ENCODE measurements at regions of chr7 and their contacts with region 1.

Region 1: GRCh38 chr7:143008007-143008901 is 18.7 kb downstream of the OR9A2 start:
- DNase-seq: peak; percentile 80
- H3K4me3 ChIP-seq: no peak overlapping the region
- H3K27ac ChIP-seq: no peak overlapping the region
- H3K4me1 ChIP-seq: peaks cover 0 to 5% (median under 1%) of the 10 kb centered on the region in 4 donors
- H3K27me3 ChIP-seq: peaks cover 6% of the 10 kb centered on the region
- CTCF ChIP-seq: peak; percentile 94 to 96 (median 95)
- EP300 ChIP-seq: no peak
- POLR2A ChIP-seq: no peak

Region 2: DNA sequence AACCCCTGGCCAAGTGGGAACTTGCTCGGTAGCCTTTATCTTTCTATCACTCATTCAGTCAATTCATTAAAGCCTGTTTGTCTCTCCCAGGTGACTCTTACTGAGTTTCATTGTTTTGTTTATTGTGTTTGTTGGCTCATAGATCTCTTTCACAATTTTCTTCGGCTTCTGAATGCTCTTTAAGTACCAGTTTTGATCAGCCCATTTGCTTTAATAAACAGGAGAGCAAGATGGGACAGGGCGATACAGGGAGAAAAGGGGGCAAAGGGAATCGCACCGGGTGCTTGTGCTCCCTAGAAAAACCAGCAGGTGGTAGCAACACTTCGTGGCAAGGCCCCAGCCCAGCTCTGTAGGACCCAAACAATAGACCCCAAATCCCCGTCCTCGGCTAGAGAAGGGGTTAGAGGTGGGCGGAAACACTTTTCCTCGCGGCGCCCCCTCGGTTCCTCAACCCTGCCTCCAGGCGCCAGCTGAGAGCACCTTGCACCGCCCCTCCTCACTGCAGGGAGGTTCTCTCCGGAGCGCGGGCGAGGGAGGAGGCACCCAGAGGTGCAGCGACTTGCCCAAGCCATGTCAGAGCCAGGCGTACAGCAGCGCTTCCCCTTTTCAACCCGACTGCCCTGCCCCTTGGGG is 154.4 kb before region 1 on chr7:
- in situ Hi-C with region 1: loop called in 1 of 4 experiments (anchors 10 kb)
- intact Hi-C with region 1: loop called (anchors 5 kb)
- DNase-seq: peak; percentile 70
- H3K4me3 ChIP-seq: peak overlapping the region; percentile 33 to 74 (median 52)
- H3K27ac ChIP-seq: peak overlapping the region; percentile 67 to 76 (median 70)
- H3K4me1 ChIP-seq: peaks cover 0 to 10% (median 4%) of the 10 kb centered on the region in 4 donors
- H3K27me3 ChIP-seq: peaks cover 3% of the 10 kb centered on the region
- CTCF ChIP-seq: peak; percentile 70 to 78 (median 73)
- EP300 ChIP-seq: no peak
- POLR2A ChIP-seq: no peak

Region 3: DNA sequence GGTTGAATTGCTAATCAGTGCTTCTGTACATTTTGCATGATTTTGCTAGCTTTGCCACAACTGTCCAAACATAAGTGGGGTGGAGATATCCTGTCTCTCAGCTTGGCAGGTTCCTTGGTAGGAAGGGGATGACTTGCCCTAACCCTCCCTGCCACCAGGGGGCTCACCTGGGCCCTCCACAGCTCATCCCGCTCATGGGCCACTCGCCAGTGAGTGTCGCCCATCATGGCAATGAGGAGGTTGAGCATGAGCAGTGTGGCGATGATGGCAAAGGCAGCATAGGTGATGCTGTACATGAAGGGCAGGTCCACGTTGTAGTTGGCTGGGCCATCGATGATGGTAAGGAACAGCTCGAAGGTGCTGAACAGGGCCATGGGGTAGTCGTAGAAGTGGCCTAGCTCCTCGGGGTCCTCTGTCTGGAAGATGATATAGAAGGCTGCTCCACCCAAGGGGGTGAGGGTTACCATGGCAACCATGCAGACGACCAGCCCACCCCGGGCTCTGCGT is 134.9 kb before region 1 on chr7:
- in situ Hi-C with region 1: loop called in 1 of 4 experiments (anchors 10 kb)
- intact Hi-C with region 1: no loop called
- DNase-seq: no peak
- H3K4me3 ChIP-seq: no peak overlapping the region
- H3K27ac ChIP-seq: no peak overlapping the region
- H3K4me1 ChIP-seq: no peaks in the 10 kb centered on the region
- H3K27me3 ChIP-seq: no peaks in the 10 kb centered on the region
- CTCF ChIP-seq: peak in 4 of 5 experiments; percentile 11 to 30 (median 20)
- EP300 ChIP-seq: no peak
- POLR2A ChIP-seq: no peak

Region 4: DNA sequence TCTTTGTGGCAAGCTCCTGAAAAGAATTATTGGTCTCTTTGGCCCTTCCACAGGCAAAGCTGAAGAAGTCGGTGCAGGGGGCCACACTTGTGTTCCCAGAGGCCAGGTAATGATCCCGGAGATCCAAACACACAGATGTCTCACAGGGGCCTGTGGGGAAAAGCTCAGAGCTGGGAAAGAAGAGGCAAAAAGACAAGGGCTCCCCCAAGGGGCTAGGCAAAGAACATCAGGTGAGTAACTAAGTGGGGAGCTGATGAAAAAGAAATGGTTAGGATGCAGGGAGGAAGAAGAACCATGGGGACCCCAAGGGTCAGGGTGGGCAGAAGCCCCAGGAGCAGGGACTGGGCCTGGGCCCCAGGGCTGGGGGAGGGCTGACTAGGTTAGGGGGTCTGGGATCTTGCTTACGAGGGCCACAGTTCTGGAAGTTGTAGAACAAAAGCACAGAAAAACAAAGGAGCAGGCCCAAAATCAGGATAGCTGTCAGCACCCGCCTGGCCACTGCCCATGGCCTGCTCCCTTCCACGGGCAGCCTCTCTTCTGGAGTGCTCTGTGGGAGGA is 47.2 kb before region 1 on chr7:
- in situ Hi-C with region 1: no loop called
- intact Hi-C with region 1: no loop called
- DNase-seq: no peak
- H3K4me3 ChIP-seq: no peak overlapping the region
- H3K27ac ChIP-seq: no peak overlapping the region
- H3K4me1 ChIP-seq: no peaks in the 10 kb centered on the region
- H3K27me3 ChIP-seq: peaks cover 8% of the 10 kb centered on the region
- CTCF ChIP-seq: no peak
- EP300 ChIP-seq: no peak
- POLR2A ChIP-seq: no peak

Region 5: DNA sequence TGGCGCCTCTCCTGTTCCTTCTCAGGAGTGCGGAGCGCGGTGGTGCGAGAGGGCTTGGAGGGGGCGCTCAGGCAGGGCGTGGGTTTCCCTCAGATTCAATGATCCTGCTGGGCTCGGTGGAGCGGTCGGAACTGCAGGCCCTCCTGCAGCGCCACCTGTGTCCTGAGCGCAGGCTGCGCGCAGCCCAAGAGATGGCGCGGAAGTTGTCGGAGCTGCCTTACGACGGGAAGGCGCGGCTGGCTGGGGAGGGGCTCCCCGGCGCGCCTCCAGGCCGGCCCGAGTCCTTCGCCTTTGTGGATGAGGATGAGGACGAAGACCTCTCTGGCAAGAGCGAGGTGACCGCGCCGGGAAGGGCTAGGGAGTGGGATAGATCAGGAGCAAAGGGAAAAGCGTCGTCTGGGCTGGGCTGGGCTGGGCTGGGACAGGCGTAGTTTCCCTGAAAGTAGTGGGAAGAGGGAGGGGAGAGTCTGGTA is 337.2 kb after region 1 on chr7:
- in situ Hi-C with region 1: loop called in 1 of 4 experiments (anchors 25 kb)
- intact Hi-C with region 1: no loop called
- DNase-seq: peak; percentile 70
- H3K4me3 ChIP-seq: peak overlapping the region in 1 of 4 donors; percentile 30
- H3K27ac ChIP-seq: no peak overlapping the region
- H3K4me1 ChIP-seq: peaks cover 0 to 8% (median 3%) of the 10 kb centered on the region in 4 donors
- H3K27me3 ChIP-seq: peaks cover 6% of the 10 kb centered on the region
- CTCF ChIP-seq: peak; percentile 41 to 61 (median 52)
- EP300 ChIP-seq: no peak
- POLR2A ChIP-seq: no peak

Region 6: DNA sequence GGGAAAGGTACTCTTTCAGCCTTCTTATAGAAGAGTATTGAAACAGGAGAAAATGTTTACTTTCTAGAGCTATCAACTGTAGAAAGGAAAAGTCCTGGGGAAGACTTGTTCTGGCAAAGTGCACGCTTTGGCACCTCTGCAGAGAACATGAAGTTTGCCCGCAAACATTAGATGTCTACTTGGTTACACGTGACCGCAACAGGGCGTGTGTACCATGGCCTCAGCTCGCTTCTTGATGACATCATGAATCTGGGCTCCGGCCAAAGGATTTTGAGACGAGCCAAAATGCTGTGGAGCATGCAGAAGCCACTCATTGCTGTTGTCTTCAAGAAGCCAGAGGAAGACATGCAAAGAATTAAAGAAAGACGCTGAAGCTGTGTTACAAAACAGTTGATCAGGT is 426.4 kb after region 1 on chr7:
- in situ Hi-C with region 1: loop called in 1 of 4 experiments (anchors 25 kb)
- intact Hi-C with region 1: no loop called
- DNase-seq: peak; percentile 53
- H3K4me3 ChIP-seq: no peak overlapping the region
- H3K27ac ChIP-seq: no peak overlapping the region
- H3K4me1 ChIP-seq: peaks cover 0 to 13% (median 6%) of the 10 kb centered on the region in 4 donors
- H3K27me3 ChIP-seq: no peaks in the 10 kb centered on the region
- CTCF ChIP-seq: no peak
- EP300 ChIP-seq: no peak
- POLR2A ChIP-seq: no peak

Measured in transverse colon (tissue), 4 donors.